ENCODE measurements at regions of chr11 and their contacts with region 1.

Region 1: DNA sequence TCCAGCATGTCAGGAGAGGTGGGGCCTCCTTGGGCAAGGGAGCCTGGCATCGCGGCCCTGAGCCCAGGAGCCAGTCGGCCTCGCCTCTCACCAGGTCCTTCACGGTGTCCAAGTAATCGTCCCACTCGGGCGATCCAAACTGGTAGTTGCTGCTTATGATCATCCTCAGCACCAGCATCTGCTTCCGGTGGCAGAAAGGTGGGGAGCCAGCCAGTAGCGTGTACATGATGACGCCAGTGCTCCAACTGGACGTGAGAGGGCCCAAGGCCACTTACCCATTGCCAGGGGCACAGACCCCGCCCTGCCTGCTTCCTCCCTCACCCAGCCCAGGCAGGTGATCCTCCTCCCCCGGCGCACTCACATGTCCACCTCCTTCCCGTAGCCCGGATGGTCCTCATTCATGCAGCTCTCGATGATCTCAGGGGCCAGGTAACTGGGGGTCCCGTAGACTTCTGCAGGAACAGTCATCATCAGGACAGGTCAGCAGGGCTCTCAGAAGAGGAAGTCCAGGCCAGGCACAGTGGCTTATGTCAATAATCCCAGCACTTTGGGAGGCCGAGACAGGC is 214.7 kb downstream of the OR4C45 start:
- DNase-seq: no peak
- ATAC-seq: no peak
- H3K4me3 ChIP-seq: no peak overlapping the region
- H3K27ac ChIP-seq: no peak overlapping the region
- H3K4me1 ChIP-seq: no peaks in the 10 kb centered on the region
- H3K27me3 ChIP-seq: no peaks in the 10 kb centered on the region
- CTCF ChIP-seq: no peak
- EP300 ChIP-seq: no peak
- POLR2A ChIP-seq: no peak
- RAD21 ChIP-seq: no peak

Region 2: DNA sequence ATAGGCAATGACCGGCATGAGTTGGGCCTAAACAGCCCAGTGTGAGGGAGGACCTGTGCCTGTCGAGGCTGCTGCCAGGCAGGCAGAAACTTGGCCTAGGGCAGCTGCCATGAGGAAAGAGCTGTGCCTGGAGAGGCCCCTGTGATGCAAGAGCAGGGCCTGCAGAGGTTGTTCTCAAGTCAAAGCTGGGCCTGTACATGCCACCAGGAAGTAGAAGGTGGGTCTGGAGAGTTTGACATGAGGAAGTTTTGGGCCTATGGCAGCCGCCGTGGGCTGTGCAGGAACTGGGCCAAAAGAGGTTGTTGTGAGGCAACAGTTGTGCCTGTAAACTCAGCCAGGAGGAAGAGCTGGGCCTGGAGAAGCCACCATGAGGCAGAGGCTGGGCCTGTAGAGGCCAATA is 171.5 kb before region 1 on chr11:
- CTCF ChIA-PET with region 1: no interaction called
- POLR2A ChIA-PET with region 1: no interaction called
- RAD21 ChIA-PET with region 1: no interaction called
- SMC1A ChIA-PET with region 1: no interaction called
- in situ Hi-C with region 1: loop called (anchors 25 kb)
- intact Hi-C with region 1: no loop called
- DNase-seq: no peak
- ATAC-seq: no peak
- H3K4me3 ChIP-seq: no peak overlapping the region
- H3K27ac ChIP-seq: no peak overlapping the region
- H3K4me1 ChIP-seq: no peaks in the 10 kb centered on the region
- H3K27me3 ChIP-seq: no peaks in the 10 kb centered on the region
- CTCF ChIP-seq: no peak
- EP300 ChIP-seq: no peak
- POLR2A ChIP-seq: no peak
- RAD21 ChIP-seq: no peak

Region 3: GRCh38 chr11:50174189-50174588 is 73.2 kb before region 1 on chr11:
- CTCF ChIA-PET with region 1: no interaction called
- POLR2A ChIA-PET with region 1: no interaction called
- RAD21 ChIA-PET with region 1: no interaction called
- SMC1A ChIA-PET with region 1: no interaction called
- in situ Hi-C with region 1: no loop called
- intact Hi-C with region 1: no loop called
- DNase-seq: no peak
- ATAC-seq: no peak
- H3K4me3 ChIP-seq: no peak overlapping the region
- H3K27ac ChIP-seq: no peak overlapping the region
- H3K4me1 ChIP-seq: no peaks in the 10 kb centered on the region
- H3K27me3 ChIP-seq: no peaks in the 10 kb centered on the region
- CTCF ChIP-seq: no peak
- EP300 ChIP-seq: no peak
- POLR2A ChIP-seq: no peak
- RAD21 ChIP-seq: no peak

Region 4: DNA sequence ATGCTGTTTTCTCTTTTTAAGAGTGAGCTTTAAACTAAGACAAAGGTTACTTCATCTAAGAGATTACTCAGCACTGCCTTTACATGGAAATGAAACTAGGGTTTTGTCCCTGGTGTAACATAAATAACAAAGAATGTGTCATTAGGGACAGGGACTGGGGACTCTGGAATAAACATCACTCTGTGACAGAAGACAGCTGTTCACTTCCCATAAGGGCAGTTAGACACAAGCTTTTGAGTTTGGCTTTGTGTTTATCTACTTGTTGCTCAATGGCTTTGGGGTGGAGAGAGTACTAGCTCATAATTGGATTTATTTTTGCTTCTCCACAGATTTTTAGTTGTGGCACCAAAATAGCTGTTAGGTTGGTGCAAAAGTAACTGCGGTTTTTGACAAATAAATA is 60.2 kb before region 1 on chr11:
- CTCF ChIA-PET with region 1: no interaction called
- POLR2A ChIA-PET with region 1: no interaction called
- RAD21 ChIA-PET with region 1: no interaction called
- SMC1A ChIA-PET with region 1: no interaction called
- in situ Hi-C with region 1: no loop called
- intact Hi-C with region 1: no loop called
- DNase-seq: no peak
- ATAC-seq: no peak
- H3K4me3 ChIP-seq: no peak overlapping the region
- H3K27ac ChIP-seq: no peak overlapping the region
- H3K4me1 ChIP-seq: no peaks in the 10 kb centered on the region
- H3K27me3 ChIP-seq: no peaks in the 10 kb centered on the region
- CTCF ChIP-seq: no peak
- EP300 ChIP-seq: no peak
- POLR2A ChIP-seq: no peak
- RAD21 ChIP-seq: no peak

Region 5: DNA sequence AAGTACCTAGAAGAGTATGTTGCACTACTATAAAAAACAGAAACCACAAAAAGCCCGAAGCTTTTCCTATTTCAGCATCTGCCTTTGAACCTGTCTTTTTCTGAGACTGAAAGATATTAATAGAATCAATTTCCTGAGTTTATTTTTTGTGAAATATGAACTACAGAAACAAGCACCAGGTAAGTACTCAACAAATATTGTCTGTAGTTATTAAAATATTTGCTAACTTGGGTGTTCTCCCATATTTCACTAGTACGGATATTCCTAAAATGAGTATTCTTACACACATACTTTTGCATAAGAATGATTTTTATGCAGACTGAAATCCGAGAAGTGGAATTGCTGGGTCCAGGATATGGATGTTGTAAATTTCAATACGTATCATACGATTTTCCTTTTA is 26.7 kb before region 1 on chr11:
- CTCF ChIA-PET with region 1: no interaction called
- POLR2A ChIA-PET with region 1: no interaction called
- RAD21 ChIA-PET with region 1: no interaction called
- SMC1A ChIA-PET with region 1: no interaction called
- in situ Hi-C with region 1: no loop called
- intact Hi-C with region 1: no loop called
- DNase-seq: no peak
- ATAC-seq: no peak
- H3K4me3 ChIP-seq: no peak overlapping the region
- H3K27ac ChIP-seq: no peak overlapping the region
- H3K4me1 ChIP-seq: no peaks in the 10 kb centered on the region
- H3K27me3 ChIP-seq: no peaks in the 10 kb centered on the region
- CTCF ChIP-seq: no peak
- EP300 ChIP-seq: no peak
- POLR2A ChIP-seq: no peak
- RAD21 ChIP-seq: no peak

Region 6: DNA sequence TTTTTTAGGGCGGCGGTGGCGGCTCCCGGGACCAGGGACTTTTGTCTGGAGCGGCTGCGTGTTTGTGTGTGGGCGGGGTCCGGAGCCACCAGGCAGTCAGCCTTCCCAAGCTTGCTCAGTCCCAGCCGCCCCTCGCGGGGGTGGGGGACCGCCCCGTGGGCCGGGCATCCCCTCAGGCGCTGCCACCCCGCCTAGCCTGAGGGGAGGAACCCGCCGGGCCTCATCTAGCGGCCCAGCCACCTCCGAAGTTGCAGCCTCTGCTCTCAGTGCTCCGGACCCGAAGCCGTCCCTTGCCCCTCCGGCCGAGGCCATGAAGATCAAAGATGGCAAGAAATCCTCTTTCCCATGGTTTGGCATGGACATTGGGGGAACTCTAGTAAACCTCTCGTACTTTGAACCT is 20.5 kb after region 1 on chr11:
- CTCF ChIA-PET with region 1: no interaction called
- POLR2A ChIA-PET with region 1: no interaction called
- RAD21 ChIA-PET with region 1: no interaction called
- SMC1A ChIA-PET with region 1: no interaction called
- in situ Hi-C with region 1: no loop called
- intact Hi-C with region 1: no loop called
- DNase-seq: no peak
- ATAC-seq: no peak
- H3K4me3 ChIP-seq: no peak overlapping the region
- H3K27ac ChIP-seq: no peak overlapping the region
- H3K4me1 ChIP-seq: no peaks in the 10 kb centered on the region
- H3K27me3 ChIP-seq: no peaks in the 10 kb centered on the region
- CTCF ChIP-seq: no peak
- EP300 ChIP-seq: no peak
- POLR2A ChIP-seq: no peak
- RAD21 ChIP-seq: no peak

Region 7: DNA sequence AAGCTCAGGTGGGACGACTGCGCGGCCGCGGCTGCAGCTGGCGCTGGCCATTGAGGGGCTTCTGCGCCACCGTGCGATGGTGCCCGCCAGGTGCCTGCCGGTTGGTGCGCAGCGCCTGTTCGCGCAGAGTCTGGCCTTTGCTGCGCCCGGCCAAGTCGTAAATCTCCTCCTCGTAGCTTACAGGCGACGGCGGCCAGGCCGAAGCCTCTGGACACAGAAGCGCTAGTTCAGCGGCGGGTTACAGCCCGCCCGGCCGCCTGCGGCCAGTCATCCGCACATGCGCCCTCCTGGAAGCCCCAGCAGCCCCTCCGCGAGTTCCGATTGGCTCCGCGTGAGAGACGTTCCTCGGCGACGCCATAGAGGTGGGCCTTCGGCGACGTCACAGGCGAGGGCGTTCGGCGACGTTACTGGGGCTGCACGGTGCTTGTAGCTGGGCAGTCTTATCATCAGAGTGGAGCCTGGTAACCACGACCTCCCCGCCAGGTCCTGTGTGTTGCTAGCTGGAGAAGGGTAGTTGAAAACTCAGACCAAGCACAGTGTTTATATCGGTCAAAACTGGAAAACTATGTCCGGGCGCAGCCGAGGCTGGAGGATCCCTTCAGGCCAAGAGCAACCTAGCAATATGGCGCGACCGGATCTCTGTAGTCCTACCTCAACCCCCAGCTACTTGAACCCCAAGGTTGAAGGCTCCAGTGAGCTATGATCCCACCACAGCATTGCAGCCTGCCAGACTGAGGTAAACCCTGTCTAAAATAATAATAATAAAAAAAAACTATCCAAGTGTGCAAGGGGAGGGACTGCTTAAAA is 51.0 kb after region 1 on chr11:
- CTCF ChIA-PET with region 1: no interaction called
- POLR2A ChIA-PET with region 1: no interaction called
- RAD21 ChIA-PET with region 1: no interaction called
- SMC1A ChIA-PET with region 1: no interaction called
- in situ Hi-C with region 1: no loop called
- intact Hi-C with region 1: loop called (anchors 10 kb)
- DNase-seq: no peak
- ATAC-seq: no peak
- H3K4me3 ChIP-seq: no peak overlapping the region
- H3K27ac ChIP-seq: no peak overlapping the region
- H3K4me1 ChIP-seq: no peaks in the 10 kb centered on the region
- H3K27me3 ChIP-seq: no peaks in the 10 kb centered on the region
- CTCF ChIP-seq: no peak
- EP300 ChIP-seq: no peak
- POLR2A ChIP-seq: no peak
- RAD21 ChIP-seq: no peak

Measured in GM12878 (cell line).